Panc1 (cell line): ENCODE measurements at regions of chr3 and their contacts with region 1.

Region 1: GRCh38 chr3:178436773-178437172 is 99.5 kb upstream of the KCNMB2 start:
- DNase-seq: no peak
- ATAC-seq: no peak
- H3K4me3 ChIP-seq: no peak overlapping the region
- H3K27ac ChIP-seq: no peak overlapping the region
- H3K4me1 ChIP-seq: no peaks in the 10 kb centered on the region
- H3K27me3 ChIP-seq: no peaks in the 10 kb centered on the region
- CTCF ChIP-seq: peak; percentile 78

Region 2: GRCh38 chr3:178966299-178967176 is 529.8 kb after region 1 on chr3:
- CTCF ChIA-PET with region 1: no interaction called
- POLR2A ChIA-PET with region 1: no interaction called
- in situ Hi-C with region 1: no loop called
- intact Hi-C with region 1: loop called (anchors 2 kb)
- DNase-seq: peak; percentile 4
- ATAC-seq: no peak
- H3K4me3 ChIP-seq: no peak overlapping the region
- H3K27ac ChIP-seq: no peak overlapping the region
- H3K4me1 ChIP-seq: no peaks in the 10 kb centered on the region
- H3K27me3 ChIP-seq: no peaks in the 10 kb centered on the region; the same call in 1 of the 2 replicates
- CTCF ChIP-seq: peak; percentile 69

Region 3: DNA sequence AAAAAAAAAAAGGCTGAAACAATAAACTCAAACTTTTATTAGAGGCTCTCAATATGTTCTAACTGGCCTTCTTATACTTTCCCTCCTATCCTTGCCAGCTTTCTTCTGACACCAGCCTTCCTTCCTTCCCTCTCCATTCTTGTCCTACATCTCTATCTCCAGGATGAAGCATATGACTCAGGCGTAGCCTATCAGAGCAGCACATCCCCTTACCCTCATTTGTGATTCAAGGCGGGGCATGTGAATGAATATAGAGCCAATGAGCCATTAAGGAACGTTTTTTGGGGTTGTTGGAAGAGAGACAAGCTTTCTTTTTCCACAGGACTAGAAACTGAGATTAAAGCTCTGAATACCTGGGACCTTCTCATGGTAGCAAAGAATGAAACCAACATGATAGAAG is 839.2 kb after region 1 on chr3:
- CTCF ChIA-PET with region 1: interaction called, 15 read pairs
- POLR2A ChIA-PET with region 1: no interaction called
- in situ Hi-C with region 1: no loop called
- intact Hi-C with region 1: no loop called
- DNase-seq: no peak
- ATAC-seq: no peak
- H3K4me3 ChIP-seq: no peak overlapping the region
- H3K27ac ChIP-seq: no peak overlapping the region
- H3K4me1 ChIP-seq: no peaks in the 10 kb centered on the region
- H3K27me3 ChIP-seq: peaks cover 2% of the 10 kb centered on the region; the same call in 1 of the 2 replicates
- CTCF ChIP-seq: no peak